Activated T-helper 1 cell treated with anti-CD3 and anti-CD28 coated beads, Interleukin-12 subunit alpha, Interleukin-12 subunit beta, Interleukin-2, Interleukin-4 antibody, amounts not matched to agents 30 ng/mL and 10 ng/mL and 1 ng/mL, durations not matched to agents 14 hours and 24 hours and 36 hours (primary cell): ENCODE measurements at regions of chr4 and their contacts with region 1.

Region 1: GRCh38 chr4:86934771-86935565 is at the start of gene AFF1:
- DNase-seq: peak; percentile 86
- H3K4me3 Mint-ChIP-seq: peak within 1 kb of the TSS; percentile 89
- H3K27ac Mint-ChIP-seq: peak within 1 kb of the TSS; percentile 97
- H3K4me1 Mint-ChIP-seq: peaks cover 48% of the 10 kb centered on the region
- H3K27me3 Mint-ChIP-seq: no peaks in the 10 kb centered on the region
- total RNA-seq, gene AFF1: 44.7 and 47.0 TPM in 2 replicates

Region 2: DNA sequence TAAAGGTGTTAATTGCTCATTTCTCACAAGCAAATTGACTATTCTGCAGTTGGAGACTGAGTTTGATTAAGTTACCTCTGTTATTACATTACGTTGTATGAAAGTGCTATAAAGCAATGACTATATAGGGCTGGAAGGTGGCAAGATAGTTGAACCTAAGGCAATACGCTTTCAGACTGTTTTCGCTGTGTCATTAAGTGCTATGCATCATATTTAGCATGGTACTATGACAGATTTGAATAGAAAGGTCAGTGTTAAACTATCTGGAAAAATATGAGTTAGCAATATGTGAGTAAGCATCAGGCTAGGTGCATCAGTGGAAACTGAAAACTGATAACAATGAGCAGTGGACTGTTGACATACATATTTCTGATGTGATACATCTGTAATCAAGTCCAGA is 1666.0 kb before region 1 on chr4:
- intact Hi-C with region 1: no loop called
- DNase-seq: no peak
- H3K4me3 Mint-ChIP-seq: no peak overlapping the region
- H3K27ac Mint-ChIP-seq: no peak overlapping the region
- H3K4me1 Mint-ChIP-seq: no peaks in the 10 kb centered on the region
- H3K27me3 Mint-ChIP-seq: no peaks in the 10 kb centered on the region

Region 3: GRCh38 chr4:85381968-85382367 is 1553.0 kb before region 1 on chr4:
- intact Hi-C with region 1: no loop called
- DNase-seq: no peak
- H3K4me3 Mint-ChIP-seq: no peak overlapping the region
- H3K27ac Mint-ChIP-seq: no peak overlapping the region
- H3K4me1 Mint-ChIP-seq: no peaks in the 10 kb centered on the region
- H3K27me3 Mint-ChIP-seq: no peaks in the 10 kb centered on the region

Region 4: GRCh38 chr4:86970426-86971354 is 35.7 kb after region 1 on chr4:
- intact Hi-C with region 1: loop called (anchors 2 kb)
- DNase-seq: no peak
- H3K4me3 Mint-ChIP-seq: no peak overlapping the region
- H3K27ac Mint-ChIP-seq: no peak overlapping the region
- H3K4me1 Mint-ChIP-seq: peaks cover 19% of the 10 kb centered on the region
- H3K27me3 Mint-ChIP-seq: no peaks in the 10 kb centered on the region

Region 5: GRCh38 chr4:87093443-87094123 is 158.6 kb after region 1 on chr4:
- intact Hi-C with region 1: loop called (anchors 1 kb)
- DNase-seq: peak; percentile 22
- H3K4me3 Mint-ChIP-seq: no peak overlapping the region
- H3K27ac Mint-ChIP-seq: peak overlapping the region; percentile 62
- H3K4me1 Mint-ChIP-seq: peaks cover 25% of the 10 kb centered on the region
- H3K27me3 Mint-ChIP-seq: no peaks in the 10 kb centered on the region

Region 6: DNA sequence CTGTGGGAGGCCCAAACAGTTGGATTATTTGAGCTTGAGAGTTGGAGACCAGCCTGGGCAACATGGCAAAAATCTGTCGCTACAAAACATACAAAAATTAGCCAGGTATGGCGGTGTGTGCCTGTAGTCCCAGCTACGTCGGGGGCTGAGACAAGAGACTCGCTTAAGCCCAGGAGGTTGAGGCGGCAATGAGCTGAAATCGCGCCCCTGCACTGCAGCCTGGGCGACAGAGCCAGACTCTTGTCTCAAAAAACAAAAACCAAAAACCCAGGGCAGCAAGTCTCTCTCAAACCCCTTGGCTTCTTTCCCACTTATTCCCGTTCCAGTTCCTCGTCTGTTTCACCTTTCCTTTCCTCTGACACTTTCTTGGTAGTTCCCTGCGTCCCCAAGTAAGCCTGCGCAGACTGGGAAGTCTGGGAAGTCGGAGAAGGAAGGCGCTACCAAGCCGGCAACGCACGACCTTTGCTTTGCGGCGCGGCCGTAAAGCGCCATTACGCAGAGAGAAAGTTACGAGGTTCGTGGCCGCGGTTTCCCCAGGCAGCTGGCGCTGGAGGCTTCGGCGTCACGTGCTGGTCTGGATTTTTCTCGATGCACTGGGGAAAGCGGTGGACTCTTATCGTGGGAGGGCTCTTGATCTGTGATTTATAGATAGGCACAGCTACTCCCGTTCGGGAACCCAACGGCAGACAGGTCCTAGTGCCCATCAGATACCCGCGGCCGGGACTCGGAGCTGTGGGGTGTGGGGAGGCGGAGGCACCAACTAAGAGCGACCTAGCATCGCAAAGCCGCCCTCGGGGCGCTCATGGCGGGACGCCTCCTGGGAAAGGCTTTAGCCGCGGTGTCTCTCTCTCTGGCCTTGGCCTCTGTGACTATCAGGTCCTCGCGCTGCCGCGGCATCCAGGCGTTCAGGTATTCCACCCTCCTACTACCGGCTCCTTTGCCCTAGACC is 487.4 kb after region 1 on chr4 and contains the start of gene NUDT9:
- intact Hi-C with region 1: loop called (anchors 1 kb)
- DNase-seq: peak; percentile 79
- H3K4me3 Mint-ChIP-seq: peak within 1 kb of the TSS; percentile 99
- H3K27ac Mint-ChIP-seq: peak within 1 kb of the TSS; percentile 95
- H3K4me1 Mint-ChIP-seq: peaks cover 30% of the 10 kb centered on the region
- H3K27me3 Mint-ChIP-seq: peaks cover 5% of the 10 kb centered on the region
- total RNA-seq, gene NUDT9: 13.9 and 14.6 TPM in 2 replicates

Region 7: DNA sequence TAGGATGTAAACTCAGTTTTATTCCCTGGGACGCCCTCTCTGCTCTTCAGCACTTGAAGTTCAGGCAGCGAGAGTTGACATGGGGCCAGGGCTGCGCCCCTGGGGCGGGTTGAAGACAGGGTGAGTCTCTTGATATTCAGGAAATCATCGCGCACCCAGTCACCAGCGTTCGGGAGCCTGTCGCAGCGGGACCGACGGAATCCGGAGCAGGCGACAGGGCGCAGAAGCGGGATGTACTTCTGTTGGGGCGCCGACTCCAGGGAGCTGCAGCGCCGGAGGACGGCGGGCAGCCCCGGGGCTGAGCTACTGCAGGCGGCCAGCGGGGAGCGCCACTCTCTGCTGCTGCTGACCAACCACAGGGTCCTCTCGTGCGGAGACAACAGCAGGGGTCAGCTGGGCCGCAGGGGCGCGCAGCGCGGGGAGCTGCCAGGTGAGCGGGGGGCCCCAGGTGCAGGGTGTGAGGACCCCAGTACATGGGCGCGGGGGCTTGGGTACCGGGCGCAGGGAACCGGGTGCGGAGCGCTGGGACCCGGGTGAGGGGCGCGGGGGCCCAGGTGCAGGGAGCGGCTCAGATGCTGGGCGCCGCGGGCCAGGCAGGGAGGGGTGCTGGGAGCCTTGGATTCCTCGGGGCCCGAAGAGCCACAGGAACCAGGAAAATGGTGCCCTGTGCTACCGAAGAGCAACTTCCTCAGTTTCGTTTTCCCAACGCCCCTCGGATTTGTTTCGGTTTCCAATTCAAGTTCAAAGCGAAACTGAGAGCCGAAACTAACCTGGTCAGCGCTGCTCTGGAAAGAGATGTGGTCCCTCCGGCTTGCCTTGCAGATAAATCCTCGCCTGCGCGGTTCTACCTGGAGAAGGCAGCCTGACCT is 1444.0 kb after region 1 on chr4 and contains the start of gene HERC6:
- intact Hi-C with region 1: loop called (anchors 5 kb)
- DNase-seq: peak; percentile 80
- H3K4me3 Mint-ChIP-seq: peak within 1 kb of the TSS; percentile 89
- H3K27ac Mint-ChIP-seq: peak within 1 kb of the TSS; percentile 81
- H3K4me1 Mint-ChIP-seq: peaks cover 47% of the 10 kb centered on the region
- H3K27me3 Mint-ChIP-seq: no peaks in the 10 kb centered on the region
- total RNA-seq, gene HERC6: 6.0 and 9.1 TPM in 2 replicates